ENCODE measurements at regions of chr9 and their contacts with region 1.

Region 1: DNA sequence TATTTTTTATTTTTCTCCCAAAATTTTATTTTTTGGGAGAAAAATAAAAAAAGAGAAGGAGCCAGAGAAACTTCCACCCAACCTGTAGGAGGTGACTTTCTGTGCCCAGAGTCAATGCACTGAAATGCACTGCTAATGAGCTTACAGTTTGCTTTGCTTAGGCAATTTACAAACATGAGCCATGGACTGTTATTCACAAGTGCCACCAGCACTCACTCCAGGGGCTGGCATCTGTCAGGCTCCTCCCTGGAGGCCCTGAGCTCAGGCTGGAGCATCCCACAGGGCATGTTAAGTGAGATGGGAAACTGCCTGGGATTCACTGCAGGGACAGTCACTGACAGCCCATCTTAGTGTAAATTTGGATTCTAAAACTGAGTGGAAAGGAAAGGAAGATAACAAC is 74.9 kb downstream of the FANCC start:
- DNase-seq: no peak
- ATAC-seq: no peak
- H3K4me3 ChIP-seq: no peak overlapping the region
- H3K27ac ChIP-seq: no peak overlapping the region
- H3K4me1 ChIP-seq: no peaks in the 10 kb centered on the region
- H3K27me3 ChIP-seq: no peaks in the 10 kb centered on the region
- CTCF ChIP-seq: no peak

Region 2: DNA sequence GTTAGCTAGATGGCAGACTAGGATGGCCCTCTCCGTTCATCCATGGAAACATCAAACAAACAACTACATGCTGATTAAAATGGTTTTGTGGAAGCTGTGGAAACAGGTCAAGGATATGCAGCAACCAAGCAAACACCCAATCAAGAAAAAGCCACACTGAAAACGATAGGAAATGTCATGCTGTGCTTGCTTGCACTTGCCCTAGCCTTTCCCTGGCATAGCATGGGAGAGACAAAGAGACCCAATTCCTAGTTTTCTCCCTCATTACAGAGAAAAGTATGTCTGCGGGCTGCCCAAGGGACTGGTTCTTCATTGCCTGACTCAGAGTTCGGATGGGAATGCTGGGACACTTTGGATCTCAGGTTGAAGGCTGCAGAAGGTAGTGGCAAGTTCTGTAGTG is 23.8 kb before region 1 on chr9:
- CTCF ChIA-PET with region 1: no interaction called
- POLR2A ChIA-PET with region 1: interaction called, 24 read pairs
- intact Hi-C with region 1: no loop called
- DNase-seq: no peak
- ATAC-seq: no peak
- H3K4me3 ChIP-seq: no peak overlapping the region
- H3K27ac ChIP-seq: no peak overlapping the region
- H3K4me1 ChIP-seq: no peaks in the 10 kb centered on the region
- H3K27me3 ChIP-seq: no peaks in the 10 kb centered on the region
- CTCF ChIP-seq: no peak

Measured in PC-3 (cell line).